ENCODE measurements at regions of chr4 and their contacts with region 1.

Region 1: GRCh38 chr4:112604589-112604988 is 32.1 kb downstream of the ZGRF1 start:
- DNase-seq: no peak

Region 2: GRCh38 chr4:112099701-112100297 is 504.8 kb before region 1 on chr4:
- intact Hi-C with region 1: loop called in 1 of 2 experiments (anchors 2 kb)
- DNase-seq: no peak

Region 3: GRCh38 chr4:112327965-112328733 is 276.4 kb before region 1 on chr4:
- intact Hi-C with region 1: loop called in 1 of 2 experiments (anchors 10 kb)
- DNase-seq: no peak

Region 4: GRCh38 chr4:112795112-112795511 is 190.5 kb after region 1 on chr4:
- intact Hi-C with region 1: no loop called
- DNase-seq: no peak